Activated CD8-positive, alpha-beta memory T cell treated with anti-CD3 and anti-CD28 coated beads, Interleukin-2, amount 10 ng/mL, durations not matched to agents 7 days and 5 days (primary cell): ENCODE measurements at regions of chr5 and their contacts with region 1.

Region 1: GRCh38 chr5:35003018-35003957 is 44.5 kb downstream of the AGXT2 start:
- DNase-seq: peak; percentile 65
- ATAC-seq: peak; percentile 74
- H3K4me3 Mint-ChIP-seq: no peak overlapping the region
- H3K27ac Mint-ChIP-seq: no peak overlapping the region
- H3K4me1 Mint-ChIP-seq: no peaks in the 10 kb centered on the region
- H3K27me3 Mint-ChIP-seq: peaks cover 40% of the 10 kb centered on the region

Region 2: DNA sequence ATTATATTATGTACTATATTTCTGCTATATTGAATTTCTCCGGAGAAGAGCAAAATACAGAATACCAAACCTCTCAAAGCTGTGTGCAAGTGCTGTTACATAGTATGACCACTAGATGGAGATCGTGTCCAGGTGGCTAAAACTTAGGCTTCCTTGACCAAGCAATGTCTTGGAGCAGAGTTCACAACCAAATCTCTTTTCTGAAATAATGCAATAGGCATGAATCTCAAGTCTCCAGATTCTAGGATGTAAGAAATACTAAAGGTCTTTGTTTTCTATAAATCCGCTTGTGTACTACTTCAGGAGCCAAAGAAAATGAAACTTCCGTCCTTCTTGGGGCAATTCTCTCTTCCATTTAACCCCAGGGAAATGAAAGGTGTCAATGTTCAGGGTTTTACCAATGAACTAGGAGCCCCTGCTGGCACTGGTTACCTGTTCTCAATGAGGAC is 528.7 kb before region 1 on chr5:
- CTCF ChIA-PET with region 1: interaction called, 13 read pairs
- DNase-seq: no peak
- ATAC-seq: peak; percentile 51
- H3K4me3 Mint-ChIP-seq: no peak overlapping the region
- H3K27ac Mint-ChIP-seq: no peak overlapping the region
- H3K4me1 Mint-ChIP-seq: no peaks in the 10 kb centered on the region
- H3K27me3 Mint-ChIP-seq: peaks cover 24% of the 10 kb centered on the region

Region 3: GRCh38 chr5:34486160-34486848 is 517.0 kb before region 1 on chr5:
- CTCF ChIA-PET with region 1: interaction called, 10 read pairs
- DNase-seq: peak; percentile 69
- ATAC-seq: no peak
- H3K4me3 Mint-ChIP-seq: no peak overlapping the region
- H3K27ac Mint-ChIP-seq: no peak overlapping the region
- H3K4me1 Mint-ChIP-seq: peaks cover 2% of the 10 kb centered on the region
- H3K27me3 Mint-ChIP-seq: peaks cover 40% of the 10 kb centered on the region

Region 4: DNA sequence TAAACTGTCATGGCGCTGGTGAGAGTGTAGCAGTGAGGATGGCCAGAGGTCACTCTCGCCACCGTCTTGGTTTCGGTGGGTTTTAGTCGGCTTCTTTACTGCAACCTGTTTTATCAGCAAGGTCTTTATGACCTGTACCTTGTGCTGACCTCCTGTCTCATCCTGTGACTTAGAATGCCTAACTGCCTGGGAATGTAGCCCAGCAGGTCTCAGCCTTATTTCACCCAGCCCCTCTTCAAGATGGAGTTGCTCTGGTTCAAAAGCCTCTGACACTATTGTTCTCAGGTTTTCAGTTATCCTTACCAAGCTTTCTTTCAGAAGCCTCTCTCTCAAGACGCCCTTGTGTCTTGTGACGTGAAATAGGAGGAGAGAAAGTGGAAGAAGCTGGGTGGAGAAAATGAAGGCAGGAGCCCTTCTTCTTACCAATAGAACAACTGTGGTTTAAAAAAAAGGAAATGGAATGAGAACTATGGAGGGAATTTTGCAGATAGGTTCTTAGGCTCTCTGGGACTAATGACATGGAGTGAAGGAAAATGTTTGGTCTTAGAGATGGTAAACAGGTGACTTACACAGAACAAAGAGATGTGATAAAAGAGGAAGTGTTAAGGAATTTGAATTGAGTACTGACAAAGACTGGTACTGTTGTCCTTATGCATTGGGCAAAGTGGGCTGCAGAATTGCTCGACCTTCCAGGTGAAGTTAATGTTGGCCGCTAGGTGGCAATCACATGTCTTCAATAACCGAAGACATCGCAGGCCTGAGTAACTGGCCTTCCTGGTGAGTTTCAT is 480.5 kb before region 1 on chr5:
- CTCF ChIA-PET with region 1: interaction called, 19 read pairs
- DNase-seq: peak; percentile 63
- ATAC-seq: peak; percentile 45
- H3K4me3 Mint-ChIP-seq: no peak overlapping the region
- H3K27ac Mint-ChIP-seq: no peak overlapping the region
- H3K4me1 Mint-ChIP-seq: peaks cover 2% of the 10 kb centered on the region
- H3K27me3 Mint-ChIP-seq: peaks cover 10% of the 10 kb centered on the region

Region 5: GRCh38 chr5:34695275-34696027 is 307.8 kb before region 1 on chr5:
- CTCF ChIA-PET with region 1: no interaction called
- DNase-seq: no peak
- ATAC-seq: no peak
- H3K4me3 Mint-ChIP-seq: no peak overlapping the region
- H3K27ac Mint-ChIP-seq: no peak overlapping the region
- H3K4me1 Mint-ChIP-seq: peaks cover 2% of the 10 kb centered on the region
- H3K27me3 Mint-ChIP-seq: no peaks in the 10 kb centered on the region

Region 6: DNA sequence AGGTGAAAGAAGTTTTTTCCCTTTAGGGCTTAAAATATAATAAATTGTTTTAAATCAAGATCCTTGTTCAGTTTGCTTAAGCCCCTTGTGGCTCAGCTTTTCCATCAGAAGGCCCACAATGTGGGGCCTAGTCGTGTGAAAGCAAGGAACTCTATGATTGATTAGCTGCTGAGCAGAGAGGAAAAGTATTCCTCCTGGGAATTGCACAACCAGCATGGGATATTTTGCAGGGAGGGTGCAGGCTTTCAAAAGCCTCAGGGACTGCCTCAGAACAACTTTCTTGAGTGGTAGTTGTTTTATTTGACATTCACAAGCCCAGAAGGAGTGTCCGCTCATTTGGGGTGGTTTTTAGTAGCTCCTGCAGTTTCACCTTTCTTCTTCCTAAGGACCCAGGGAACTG is 144.5 kb before region 1 on chr5:
- CTCF ChIA-PET with region 1: no interaction called
- DNase-seq: no peak
- ATAC-seq: no peak
- H3K4me3 Mint-ChIP-seq: no peak overlapping the region
- H3K27ac Mint-ChIP-seq: no peak overlapping the region
- H3K4me1 Mint-ChIP-seq: no peaks in the 10 kb centered on the region
- H3K27me3 Mint-ChIP-seq: peaks cover 5% of the 10 kb centered on the region

Region 7: DNA sequence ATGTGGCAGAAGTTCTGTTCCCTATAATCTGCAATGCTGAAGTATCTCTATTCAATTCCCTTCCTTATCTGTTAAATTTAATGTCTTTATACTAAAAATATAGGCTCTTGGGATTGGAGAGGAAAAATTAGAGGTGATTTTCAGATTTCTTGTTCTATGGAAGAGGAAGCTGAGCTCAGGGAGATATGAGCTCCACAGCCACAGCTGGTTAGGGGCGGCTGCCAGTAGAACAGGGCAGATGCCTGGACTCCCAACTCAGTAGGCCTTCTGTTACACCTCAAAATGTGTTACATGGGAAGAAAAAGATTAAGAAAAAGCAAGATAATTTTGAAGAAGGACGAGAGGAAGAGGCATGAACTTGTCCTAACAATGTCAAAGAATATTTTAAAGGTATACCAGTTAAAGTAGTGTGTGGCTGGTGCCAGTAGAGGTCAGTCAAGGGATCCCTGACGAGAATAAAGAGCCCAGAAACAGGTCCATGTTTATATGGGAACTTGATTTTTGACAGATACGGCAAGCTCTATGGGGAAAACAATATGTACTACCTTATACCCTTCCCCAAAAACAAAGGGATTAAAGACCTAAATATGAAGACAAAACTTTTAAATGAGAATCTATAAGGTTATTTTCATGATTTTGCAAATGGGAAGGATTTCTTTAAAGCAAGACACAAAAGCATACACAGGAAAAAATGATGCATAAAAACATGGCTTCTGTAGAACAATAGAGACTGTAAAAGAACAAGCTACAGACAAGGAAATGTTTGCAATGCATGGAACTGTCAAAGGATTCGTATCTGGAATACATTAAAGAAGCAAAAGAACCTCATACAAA is 45.2 kb before region 1 on chr5:
- CTCF ChIA-PET with region 1: interaction called, 30 read pairs
- DNase-seq: no peak
- ATAC-seq: no peak
- H3K4me3 Mint-ChIP-seq: no peak overlapping the region
- H3K27ac Mint-ChIP-seq: no peak overlapping the region
- H3K4me1 Mint-ChIP-seq: peaks cover 23% of the 10 kb centered on the region
- H3K27me3 Mint-ChIP-seq: no peaks in the 10 kb centered on the region